IMR-90 (cell line): ENCODE measurements at regions of chr22 and their contacts with region 1.

Region 1: GRCh38 chr22:23128269-23129108 is 13.3 kb downstream of the RSPH14 start:
- DNase-seq: peak; percentile 84
- ATAC-seq: peak; percentile 97
- H3K4me3 ChIP-seq: no peak overlapping the region
- H3K27ac ChIP-seq: no peak overlapping the region
- H3K4me1 ChIP-seq: peaks cover 3% of the 10 kb centered on the region; the same call in 1 of the 2 replicates
- H3K27me3 ChIP-seq: peaks cover 21% of the 10 kb centered on the region
- CTCF ChIP-seq: peak; percentile 96
- POLR2A ChIP-seq: 0 out of 2 replicates have a peak, but pooled peaks have one; percentile 28
- RAD21 ChIP-seq: peak; percentile 97

Region 2: DNA sequence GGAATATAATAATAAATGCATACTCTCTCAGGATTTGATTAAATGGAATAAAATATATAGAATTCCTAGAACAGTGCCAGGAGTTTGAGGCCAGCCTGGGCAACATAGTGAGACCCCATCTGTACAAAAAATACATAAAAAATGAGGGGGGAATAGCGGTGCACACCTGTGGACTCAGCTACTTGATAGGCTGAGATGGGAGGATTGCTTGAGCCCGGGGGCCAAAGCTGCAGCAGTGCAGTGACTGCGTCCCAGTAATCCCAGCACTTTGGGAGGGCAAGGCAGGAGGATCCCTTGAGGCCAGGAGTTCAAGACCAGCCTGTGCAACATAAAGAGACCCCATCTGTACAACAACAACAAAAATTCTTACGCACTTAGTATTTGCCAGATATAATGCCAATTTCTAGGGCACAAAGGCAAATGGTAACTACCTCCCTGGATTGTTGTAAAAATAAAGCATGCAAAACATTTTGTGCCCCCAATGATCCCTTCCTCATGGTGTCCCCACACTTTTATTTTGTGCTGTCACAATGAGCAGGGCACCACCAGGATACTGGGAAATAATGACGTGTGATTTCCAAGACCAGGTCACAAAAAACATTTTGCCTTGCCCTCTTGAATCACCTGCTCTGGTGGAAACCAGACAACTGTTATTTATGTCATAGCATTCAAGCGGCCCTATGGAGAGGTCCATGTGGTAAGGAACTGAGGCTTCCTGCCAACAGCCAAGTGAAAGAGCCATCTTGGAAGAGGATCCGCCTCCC is 590.1 kb before region 1 on chr22:
- CTCF ChIA-PET with region 1: no interaction called
- POLR2A ChIA-PET with region 1: no interaction called
- dilution Hi-C with region 1: no loop called
- in situ Hi-C with region 1: no loop called
- intact Hi-C with region 1: no loop called
- DNase-seq: no peak
- ATAC-seq: no peak
- H3K4me3 ChIP-seq: no peak overlapping the region
- H3K27ac ChIP-seq: no peak overlapping the region
- H3K4me1 ChIP-seq: no peaks in the 10 kb centered on the region
- H3K27me3 ChIP-seq: no peaks in the 10 kb centered on the region
- CTCF ChIP-seq: no peak
- POLR2A ChIP-seq: no peak
- RAD21 ChIP-seq: no peak

Region 3: GRCh38 chr22:22855617-22856308 is 272.7 kb before region 1 on chr22:
- CTCF ChIA-PET with region 1: no interaction called
- POLR2A ChIA-PET with region 1: no interaction called
- dilution Hi-C with region 1: no loop called
- in situ Hi-C with region 1: loop called (anchors 10 kb)
- intact Hi-C with region 1: no loop called
- DNase-seq: no peak
- ATAC-seq: peak; percentile 74
- H3K4me3 ChIP-seq: no peak overlapping the region
- H3K27ac ChIP-seq: no peak overlapping the region
- H3K4me1 ChIP-seq: no peaks in the 10 kb centered on the region
- H3K27me3 ChIP-seq: peaks cover 10% of the 10 kb centered on the region
- CTCF ChIP-seq: peak; percentile 46
- POLR2A ChIP-seq: no peak
- RAD21 ChIP-seq: peak; percentile 37; the same call in 1 of the 2 replicates